MCF 10A (cell line): ENCODE measurements at regions of chr19 and their contacts with region 1.

Region 1: DNA sequence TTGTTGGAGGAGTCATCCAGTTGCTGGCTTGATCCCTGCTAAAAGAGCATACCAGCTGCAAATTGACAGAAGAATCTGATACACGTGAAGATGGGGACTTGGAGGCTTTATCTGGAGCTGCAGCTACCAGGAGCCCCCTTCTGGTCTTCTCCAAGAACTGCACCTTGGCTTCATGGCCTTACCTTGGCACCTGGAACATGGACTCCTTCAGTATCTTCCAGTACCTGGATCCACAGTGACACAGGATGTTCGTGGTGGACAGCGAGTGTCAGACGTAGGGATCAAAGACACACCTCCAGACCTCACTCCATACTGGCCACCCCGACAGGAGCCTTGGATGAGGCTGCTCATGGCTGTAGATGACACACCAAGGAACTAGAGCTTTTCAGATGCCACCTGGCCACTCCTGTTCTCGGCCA is 9.9 kb upstream of the ACSBG2 start:
- DNase-seq: peak; percentile 90
- H3K4me3 Mint-ChIP-seq: no peak overlapping the region
- H3K27ac Mint-ChIP-seq: no peak overlapping the region
- H3K4me1 Mint-ChIP-seq: peaks cover 5% of the 10 kb centered on the region
- H3K27me3 Mint-ChIP-seq: no peaks in the 10 kb centered on the region
- CTCF ChIP-seq: peak; percentile 96

Region 2: GRCh38 chr19:6048808-6049405 is 76.7 kb before region 1 on chr19:
- CTCF ChIA-PET with region 1: interaction called, 114 read pairs
- POLR2A ChIA-PET with region 1: interaction called, 16 read pairs
- intact Hi-C with region 1: loop called (anchors 1 kb)
- DNase-seq: peak; percentile 89
- H3K4me3 Mint-ChIP-seq: no peak overlapping the region
- H3K27ac Mint-ChIP-seq: no peak overlapping the region
- H3K4me1 Mint-ChIP-seq: peaks cover 7% of the 10 kb centered on the region
- H3K27me3 Mint-ChIP-seq: no peaks in the 10 kb centered on the region
- CTCF ChIP-seq: peak; percentile 89

Region 3: DNA sequence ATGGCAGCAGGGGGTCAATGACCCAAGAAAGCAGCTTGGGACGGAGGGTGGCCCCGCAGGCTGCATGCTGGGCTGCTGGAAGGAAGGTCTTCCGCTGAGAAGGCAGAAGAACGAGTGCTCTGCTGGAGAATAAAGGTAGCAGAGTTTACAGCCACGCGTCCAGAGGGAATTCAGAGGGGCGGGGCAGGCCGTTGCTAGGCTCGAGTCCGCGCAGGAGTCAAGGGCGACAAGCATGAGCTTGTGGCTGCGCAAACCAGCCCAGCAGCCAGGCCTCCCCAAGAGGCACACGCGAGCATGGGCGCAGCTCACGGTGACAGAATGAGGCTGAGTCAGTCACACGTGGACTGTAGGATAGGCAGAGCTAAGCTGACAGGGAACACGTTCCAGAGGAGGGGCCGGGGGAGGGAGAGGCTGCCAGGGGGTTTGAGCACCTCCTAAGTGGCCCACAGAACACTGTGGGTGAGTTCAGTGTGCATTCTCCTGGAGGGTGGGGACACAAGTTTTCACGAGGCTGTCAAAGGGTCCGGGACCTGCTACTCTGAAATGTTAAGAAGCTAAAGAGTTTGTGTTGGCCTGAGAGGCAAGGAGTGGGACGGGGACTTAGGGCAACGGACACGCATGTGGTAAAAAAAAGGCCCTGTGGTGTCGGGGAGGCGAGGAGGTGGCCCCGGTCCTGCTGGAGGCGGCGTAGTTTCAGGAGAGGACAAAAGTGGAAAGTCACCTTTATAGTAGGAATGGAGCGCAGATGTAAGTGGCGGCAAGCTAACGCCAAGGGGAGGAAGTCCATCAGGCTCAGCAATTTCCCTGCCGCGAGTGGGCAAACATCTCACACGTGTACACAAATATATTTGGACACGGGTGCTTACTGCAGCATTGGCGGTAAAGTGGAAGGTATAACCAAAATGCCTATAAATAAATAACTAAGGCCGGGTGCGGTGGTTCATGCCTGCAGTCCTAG is 33.0 kb before region 1 on chr19:
- CTCF ChIA-PET with region 1: interaction called, 14 read pairs
- POLR2A ChIA-PET with region 1: interaction called, 7 read pairs
- intact Hi-C with region 1: loop called (anchors 1 kb)
- DNase-seq: peak; percentile 88
- H3K4me3 Mint-ChIP-seq: peak overlapping the region; percentile 66
- H3K27ac Mint-ChIP-seq: peak overlapping the region; percentile 97
- H3K4me1 Mint-ChIP-seq: peaks cover 32% of the 10 kb centered on the region
- H3K27me3 Mint-ChIP-seq: no peaks in the 10 kb centered on the region
- CTCF ChIP-seq: no peak

Region 4: GRCh38 chr19:6218491-6219162 is 93.0 kb after region 1 on chr19:
- CTCF ChIA-PET with region 1: interaction called, 5 read pairs
- POLR2A ChIA-PET with region 1: no interaction called
- intact Hi-C with region 1: loop called (anchors 5 kb)
- DNase-seq: peak; percentile 91
- H3K4me3 Mint-ChIP-seq: no peak overlapping the region
- H3K27ac Mint-ChIP-seq: no peak overlapping the region
- H3K4me1 Mint-ChIP-seq: peaks cover 6% of the 10 kb centered on the region
- H3K27me3 Mint-ChIP-seq: no peaks in the 10 kb centered on the region
- CTCF ChIP-seq: peak; percentile 97

Region 5: DNA sequence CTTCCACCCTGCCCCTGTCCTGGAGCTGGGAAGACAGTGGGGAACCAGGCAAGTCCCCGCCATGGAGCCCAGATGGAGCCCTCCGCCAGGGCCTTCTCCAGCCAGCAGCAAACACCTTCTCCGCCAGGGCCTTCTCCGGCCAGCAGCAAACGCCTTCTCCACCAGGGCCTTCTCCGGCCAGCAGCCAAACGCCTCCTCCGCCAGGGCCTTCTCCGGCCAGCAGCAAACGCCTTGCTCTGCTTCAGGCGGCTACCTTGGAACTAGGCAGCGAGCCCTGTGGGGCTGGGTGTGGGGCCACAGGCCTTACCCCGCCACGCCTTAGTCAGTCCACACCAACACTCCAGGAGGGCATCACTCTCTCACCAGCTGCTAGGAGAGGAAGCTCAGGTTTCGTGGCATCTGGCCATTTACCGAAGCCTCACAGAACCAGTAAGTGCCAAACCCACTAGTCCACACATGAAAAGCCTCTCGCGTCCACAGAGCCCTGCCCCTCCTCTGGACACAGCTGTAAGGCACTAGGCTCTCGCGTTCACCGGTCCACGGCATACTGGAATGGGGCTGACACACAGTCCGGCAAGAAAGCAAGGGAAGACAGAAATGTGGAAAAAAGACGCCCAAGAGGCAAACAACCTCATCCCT is 113.2 kb after region 1 on chr19:
- CTCF ChIA-PET with region 1: no interaction called
- POLR2A ChIA-PET with region 1: no interaction called
- intact Hi-C with region 1: no loop called
- DNase-seq: peak; percentile 79
- H3K4me3 Mint-ChIP-seq: peak overlapping the region; percentile 56
- H3K27ac Mint-ChIP-seq: peak overlapping the region; percentile 3
- H3K4me1 Mint-ChIP-seq: peaks cover 34% of the 10 kb centered on the region
- H3K27me3 Mint-ChIP-seq: no peaks in the 10 kb centered on the region
- CTCF ChIP-seq: no peak

Region 6: DNA sequence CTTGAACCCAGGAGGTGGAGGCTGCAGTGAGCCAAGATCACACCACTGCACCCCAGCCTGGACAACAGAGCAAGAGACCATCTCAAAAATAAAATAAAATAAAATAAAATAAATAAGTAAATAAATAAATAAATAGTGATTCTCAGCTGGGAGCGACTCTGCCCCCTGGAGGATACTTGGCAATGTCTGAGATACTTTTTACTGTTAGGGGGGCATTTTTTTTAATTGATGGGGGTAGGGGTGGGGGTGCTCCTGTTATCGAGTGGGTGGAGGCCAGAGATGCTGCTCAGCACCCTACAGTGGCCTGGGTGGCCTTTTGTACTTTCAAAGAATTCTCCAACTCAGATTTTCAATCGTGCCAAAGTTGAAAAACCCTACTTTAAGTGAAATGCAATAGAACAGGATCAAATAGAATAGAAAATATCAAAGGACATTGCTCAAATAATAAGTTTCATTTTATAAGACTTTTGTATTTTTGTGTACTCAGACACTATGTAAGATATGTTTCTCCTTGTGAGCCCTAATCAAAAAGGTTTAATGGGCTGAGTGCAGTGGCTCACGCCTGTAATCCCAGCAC is 228.6 kb after region 1 on chr19:
- CTCF ChIA-PET with region 1: no interaction called
- POLR2A ChIA-PET with region 1: interaction called, 4 read pairs
- intact Hi-C with region 1: loop called (anchors 2 kb)
- DNase-seq: no peak
- H3K4me3 Mint-ChIP-seq: no peak overlapping the region
- H3K27ac Mint-ChIP-seq: no peak overlapping the region
- H3K4me1 Mint-ChIP-seq: peaks cover 11% of the 10 kb centered on the region
- H3K27me3 Mint-ChIP-seq: no peaks in the 10 kb centered on the region
- CTCF ChIP-seq: peak; percentile 46

Region 7: GRCh38 chr19:6632002-6632621 is 506.5 kb after region 1 on chr19:
- CTCF ChIA-PET with region 1: no interaction called
- POLR2A ChIA-PET with region 1: no interaction called
- intact Hi-C with region 1: loop called (anchors 2 kb)
- DNase-seq: peak; percentile 89
- H3K4me3 Mint-ChIP-seq: no peak overlapping the region
- H3K27ac Mint-ChIP-seq: no peak overlapping the region
- H3K4me1 Mint-ChIP-seq: peaks cover 6% of the 10 kb centered on the region
- H3K27me3 Mint-ChIP-seq: no peaks in the 10 kb centered on the region
- CTCF ChIP-seq: peak; percentile 85

Region 8: DNA sequence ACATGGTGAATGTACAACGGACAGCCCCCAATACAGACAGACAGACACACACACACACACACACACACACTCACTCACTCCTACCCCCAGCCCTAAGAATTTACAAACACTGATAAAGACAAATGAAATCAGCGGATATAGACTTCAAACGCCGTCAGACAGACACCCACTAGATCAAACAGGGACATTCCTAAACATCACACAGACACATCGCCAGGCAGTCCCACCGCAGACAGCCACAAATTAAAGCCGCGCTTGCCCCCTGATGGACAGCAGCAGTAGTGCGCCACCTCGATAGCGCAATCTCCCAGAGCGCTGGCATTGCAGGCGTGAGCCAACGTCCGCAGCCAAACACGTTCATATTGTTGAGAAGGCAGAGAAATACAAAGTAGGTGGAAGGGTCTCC is 737.1 kb after region 1 on chr19:
- CTCF ChIA-PET with region 1: interaction called, 7 read pairs
- POLR2A ChIA-PET with region 1: no interaction called
- intact Hi-C with region 1: loop called (anchors 2 kb)
- DNase-seq: peak; percentile 89
- H3K4me3 Mint-ChIP-seq: peak overlapping the region; percentile 68
- H3K27ac Mint-ChIP-seq: peak overlapping the region; percentile 27
- H3K4me1 Mint-ChIP-seq: peaks cover 16% of the 10 kb centered on the region
- H3K27me3 Mint-ChIP-seq: peaks cover 23% of the 10 kb centered on the region
- CTCF ChIP-seq: peak; percentile 88